Caco-2 (cell line): ENCODE measurements at regions of chr5 and their contacts with region 1.

Region 1: DNA sequence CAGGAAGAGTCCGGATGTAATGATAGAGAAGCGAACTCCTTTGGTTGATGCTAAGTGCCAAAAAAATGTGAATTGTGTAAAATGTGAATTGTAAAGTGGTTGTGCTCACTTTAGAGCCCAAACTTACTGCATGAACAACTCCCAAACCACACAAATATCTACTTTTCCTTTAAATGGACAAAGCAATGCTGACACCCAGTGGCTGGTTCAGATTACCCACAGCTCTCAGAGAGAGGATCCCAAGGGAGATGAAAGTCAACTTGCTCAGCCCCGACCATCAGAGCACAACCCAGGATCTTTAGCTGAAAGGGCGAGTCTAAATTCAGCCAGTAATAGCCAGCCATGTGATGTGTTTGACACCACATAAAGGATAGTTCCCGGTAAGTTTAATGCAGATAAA is 133.7 kb downstream of the NMUR2 start:
- DNase-seq: peak; percentile 39 to 42
- H3K4me3 ChIP-seq: no peak overlapping the region
- H3K4me3 Mint-ChIP-seq: no peak overlapping the region
- H3K27ac Mint-ChIP-seq: no peak overlapping the region
- H3K4me1 ChIP-seq: no peaks in the 10 kb centered on the region
- H3K4me1 Mint-ChIP-seq: no peaks in the 10 kb centered on the region
- H3K27me3 ChIP-seq: no peaks in the 10 kb centered on the region
- H3K27me3 Mint-ChIP-seq: peaks cover 16% of the 10 kb centered on the region
- CTCF ChIP-seq: peak; percentile 12 to 67

Region 2: DNA sequence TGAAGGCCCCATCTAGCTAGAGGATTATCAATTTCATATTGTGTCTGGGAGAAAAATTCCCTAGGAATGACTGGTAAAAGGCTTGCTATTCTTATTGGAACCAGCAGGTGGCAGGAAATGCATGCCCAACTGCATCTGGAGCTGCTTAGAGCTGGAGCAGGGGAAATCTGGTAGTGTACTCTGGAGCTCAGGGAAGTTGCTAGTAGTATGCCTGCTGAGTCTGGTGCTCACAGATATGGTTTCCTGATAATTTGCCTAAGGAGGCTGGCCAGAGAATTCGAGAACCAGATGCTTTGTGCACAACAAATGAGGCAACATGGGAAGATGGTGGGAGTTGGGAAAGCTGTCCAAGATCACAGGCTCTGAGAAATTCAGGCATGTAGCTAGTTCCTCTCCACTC is 446.0 kb before region 1 on chr5:
- CTCF ChIA-PET with region 1: interaction called, 7 read pairs
- POLR2A ChIA-PET with region 1: no interaction called
- intact Hi-C with region 1: loop called (anchors 1 kb)
- DNase-seq: peak; percentile 70
- H3K4me3 ChIP-seq: no peak overlapping the region
- H3K4me3 Mint-ChIP-seq: no peak overlapping the region
- H3K27ac Mint-ChIP-seq: no peak overlapping the region
- H3K4me1 ChIP-seq: no peaks in the 10 kb centered on the region
- H3K4me1 Mint-ChIP-seq: no peaks in the 10 kb centered on the region
- H3K27me3 ChIP-seq: no peaks in the 10 kb centered on the region
- H3K27me3 Mint-ChIP-seq: no peaks in the 10 kb centered on the region
- CTCF ChIP-seq: peak; percentile 78 to 83

Region 3: GRCh38 chr5:152142840-152143469 is 128.5 kb before region 1 on chr5:
- CTCF ChIA-PET with region 1: interaction called, 3 read pairs
- POLR2A ChIA-PET with region 1: no interaction called
- intact Hi-C with region 1: loop called (anchors 5 kb)
- DNase-seq: peak; percentile 61 to 75
- H3K4me3 ChIP-seq: no peak overlapping the region
- H3K4me3 Mint-ChIP-seq: no peak overlapping the region
- H3K27ac Mint-ChIP-seq: no peak overlapping the region
- H3K4me1 ChIP-seq: no peaks in the 10 kb centered on the region
- H3K4me1 Mint-ChIP-seq: no peaks in the 10 kb centered on the region
- H3K27me3 ChIP-seq: no peaks in the 10 kb centered on the region; the same call in 1 of the 2 replicates
- H3K27me3 Mint-ChIP-seq: peaks cover 8% of the 10 kb centered on the region
- CTCF ChIP-seq: peak; percentile 78 to 93

Region 4: DNA sequence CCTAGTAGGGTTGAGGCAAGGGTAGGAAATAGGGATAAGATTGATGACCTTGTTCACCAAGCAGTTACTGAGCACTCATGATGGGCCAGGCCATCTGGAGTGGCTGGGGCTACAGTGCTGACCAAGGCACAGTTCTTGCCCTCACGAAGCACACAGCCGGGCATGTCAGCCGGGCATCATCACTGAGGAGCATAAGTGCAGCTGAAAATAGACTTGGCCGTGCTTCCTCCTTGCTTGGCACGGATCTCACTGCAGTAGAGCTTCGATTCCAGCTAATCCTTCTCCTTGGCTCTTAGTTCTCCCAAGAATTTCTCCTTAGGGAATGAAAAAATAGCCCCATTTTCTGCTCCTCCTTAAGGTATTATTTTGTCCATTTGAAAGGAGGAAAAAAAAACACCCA is 17.1 kb after region 1 on chr5:
- CTCF ChIA-PET with region 1: no interaction called
- POLR2A ChIA-PET with region 1: no interaction called
- intact Hi-C with region 1: loop called (anchors 2 kb)
- DNase-seq: no peak
- H3K4me3 ChIP-seq: no peak overlapping the region
- H3K4me3 Mint-ChIP-seq: no peak overlapping the region
- H3K27ac Mint-ChIP-seq: no peak overlapping the region
- H3K4me1 ChIP-seq: no peaks in the 10 kb centered on the region
- H3K4me1 Mint-ChIP-seq: peaks cover 11% of the 10 kb centered on the region
- H3K27me3 ChIP-seq: no peaks in the 10 kb centered on the region
- H3K27me3 Mint-ChIP-seq: peaks cover 3% of the 10 kb centered on the region
- CTCF ChIP-seq: no peak

Region 5: DNA sequence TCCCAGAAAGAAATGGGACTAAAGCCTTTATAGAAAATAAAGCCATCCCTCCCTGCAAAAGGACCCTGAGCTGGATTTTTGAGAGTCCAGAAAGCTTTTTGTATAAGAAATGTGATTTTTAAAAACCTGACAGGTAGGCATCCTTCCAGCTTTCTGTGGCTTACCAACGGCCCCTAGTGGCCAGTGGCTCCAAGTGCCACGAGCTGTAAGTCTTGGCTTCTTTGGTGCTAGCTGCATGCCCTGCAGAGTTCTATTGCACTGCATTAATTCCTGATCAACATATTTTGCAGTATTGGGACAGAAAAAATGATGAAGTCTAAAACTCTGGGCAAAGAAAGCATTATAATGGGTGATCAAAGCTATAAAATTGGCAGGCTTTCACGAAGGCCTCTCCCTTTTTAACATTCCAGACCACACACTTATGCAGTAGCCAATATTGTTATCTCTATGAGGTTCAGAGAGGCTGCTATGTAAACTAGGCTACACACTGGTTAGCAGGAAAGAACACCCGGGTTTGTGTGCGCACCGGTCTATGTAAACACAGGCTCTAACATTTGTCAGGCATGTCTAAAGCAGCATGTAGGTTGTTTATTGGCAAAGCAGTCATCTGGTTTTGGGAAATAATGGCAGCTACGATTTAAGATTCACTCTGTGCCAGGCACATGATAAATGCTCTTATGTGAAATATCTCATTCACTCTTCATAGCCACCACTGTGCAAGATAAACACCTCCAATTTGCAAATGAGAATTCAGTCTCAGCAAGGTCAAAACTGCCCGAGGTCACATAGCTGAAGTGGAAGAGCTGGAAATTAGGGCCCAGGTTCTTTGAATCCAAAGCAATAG is 78.5 kb after region 1 on chr5:
- CTCF ChIA-PET with region 1: interaction called, 3 read pairs
- POLR2A ChIA-PET with region 1: no interaction called
- intact Hi-C with region 1: loop called (anchors 5 kb)
- DNase-seq: peak; percentile 60 to 66
- H3K4me3 ChIP-seq: no peak overlapping the region
- H3K4me3 Mint-ChIP-seq: no peak overlapping the region
- H3K27ac Mint-ChIP-seq: no peak overlapping the region
- H3K4me1 ChIP-seq: peaks cover 9% of the 10 kb centered on the region
- H3K4me1 Mint-ChIP-seq: peaks cover 6% of the 10 kb centered on the region
- H3K27me3 ChIP-seq: no peaks in the 10 kb centered on the region
- H3K27me3 Mint-ChIP-seq: no peaks in the 10 kb centered on the region
- CTCF ChIP-seq: peak; percentile 89 to 94

Region 6: GRCh38 chr5:152488869-152489268 is 217.4 kb after region 1 on chr5:
- CTCF ChIA-PET with region 1: no interaction called
- POLR2A ChIA-PET with region 1: no interaction called
- intact Hi-C with region 1: no loop called
- DNase-seq: no peak
- H3K4me3 ChIP-seq: no peak overlapping the region
- H3K4me3 Mint-ChIP-seq: no peak overlapping the region
- H3K27ac Mint-ChIP-seq: no peak overlapping the region
- H3K4me1 ChIP-seq: no peaks in the 10 kb centered on the region
- H3K4me1 Mint-ChIP-seq: no peaks in the 10 kb centered on the region
- H3K27me3 ChIP-seq: no peaks in the 10 kb centered on the region
- H3K27me3 Mint-ChIP-seq: no peaks in the 10 kb centered on the region
- CTCF ChIP-seq: no peak

Region 7: GRCh38 chr5:152505442-152506042 is 234.1 kb after region 1 on chr5:
- CTCF ChIA-PET with region 1: no interaction called
- POLR2A ChIA-PET with region 1: no interaction called
- intact Hi-C with region 1: loop called (anchors 5 kb)
- DNase-seq: peak; percentile 58 to 61
- H3K4me3 ChIP-seq: no peak overlapping the region
- H3K4me3 Mint-ChIP-seq: no peak overlapping the region
- H3K27ac Mint-ChIP-seq: no peak overlapping the region
- H3K4me1 ChIP-seq: no peaks in the 10 kb centered on the region
- H3K4me1 Mint-ChIP-seq: no peaks in the 10 kb centered on the region
- H3K27me3 ChIP-seq: no peaks in the 10 kb centered on the region
- H3K27me3 Mint-ChIP-seq: peaks cover 11% of the 10 kb centered on the region
- CTCF ChIP-seq: peak; percentile 51 to 59

Region 8: GRCh38 chr5:152838241-152838786 is 566.9 kb after region 1 on chr5:
- CTCF ChIA-PET with region 1: interaction called, 10 read pairs
- POLR2A ChIA-PET with region 1: no interaction called
- intact Hi-C with region 1: no loop called
- DNase-seq: no peak
- H3K4me3 ChIP-seq: no peak overlapping the region
- H3K4me3 Mint-ChIP-seq: no peak overlapping the region
- H3K27ac Mint-ChIP-seq: no peak overlapping the region
- H3K4me1 ChIP-seq: no peaks in the 10 kb centered on the region
- H3K4me1 Mint-ChIP-seq: no peaks in the 10 kb centered on the region
- H3K27me3 ChIP-seq: no peaks in the 10 kb centered on the region
- H3K27me3 Mint-ChIP-seq: peaks cover 6% of the 10 kb centered on the region
- CTCF ChIP-seq: no peak